CD8-positive, alpha-beta T cell (primary cell): ENCODE measurements at regions of chr3 and their contacts with region 1.

Region 1: DNA sequence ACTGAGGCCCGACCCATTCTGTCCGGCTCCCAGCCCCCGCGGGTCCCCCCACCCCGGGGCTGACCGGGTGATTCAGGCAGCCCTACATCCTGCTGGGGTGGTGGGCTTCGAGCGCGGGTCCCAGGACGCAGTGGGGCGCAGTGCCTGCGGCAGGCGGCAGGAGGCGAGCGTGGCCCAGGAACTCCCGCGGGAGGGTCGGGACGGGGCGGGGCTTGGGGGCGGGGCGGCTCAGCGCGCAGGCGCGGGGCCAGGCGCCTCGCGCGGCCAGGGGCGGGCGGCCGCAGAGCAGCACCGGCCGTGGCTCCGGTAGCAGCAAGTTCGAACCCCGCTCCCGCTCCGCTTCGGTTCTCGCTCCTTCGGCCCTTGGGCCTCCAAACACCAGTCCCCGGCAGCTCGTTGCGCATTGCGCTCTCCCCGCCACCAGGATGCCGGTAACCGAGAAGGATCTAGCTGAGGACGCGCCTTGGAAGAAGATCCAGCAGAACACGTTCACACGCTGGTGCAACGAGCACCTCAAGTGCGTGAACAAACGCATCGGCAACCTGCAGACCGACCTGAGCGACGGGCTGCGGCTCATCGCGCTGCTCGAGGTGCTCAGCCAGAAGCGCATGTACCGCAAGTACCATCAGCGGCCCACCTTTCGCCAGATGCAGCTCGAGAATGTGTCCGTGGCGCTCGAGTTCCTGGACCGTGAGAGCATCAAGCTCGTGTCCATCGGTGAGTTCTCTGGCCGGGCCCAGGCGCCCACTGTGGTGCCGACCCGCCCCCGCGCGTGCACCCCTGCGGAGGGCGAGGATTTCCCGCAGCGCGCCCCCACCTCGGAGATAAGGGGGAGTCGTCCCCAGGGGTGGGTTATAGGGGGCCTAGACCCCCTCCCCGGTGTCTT is at the start of gene FLNB:
- DNase-seq: peak; percentile 62 to 87 (median 74)
- ATAC-seq: peak; percentile 86
- H3K4me3 ChIP-seq: peak within 1 kb of the TSS; percentile 85 to 97
- H3K4me3 Mint-ChIP-seq: peak within 1 kb of the TSS; percentile 86
- H3K27ac ChIP-seq: peak within 1 kb of the TSS; percentile 46 to 72
- H3K27ac Mint-ChIP-seq: peak within 1 kb of the TSS; percentile 84
- H3K4me1 ChIP-seq: peaks cover 40% of the 10 kb centered on the region
- H3K4me1 Mint-ChIP-seq: peaks cover 38% of the 10 kb centered on the region
- H3K27me3 ChIP-seq: no peaks in the 10 kb centered on the region
- H3K27me3 Mint-ChIP-seq: no peaks in the 10 kb centered on the region
- CTCF ChIP-seq: peak; percentile 77
- total RNA-seq, gene FLNB: 46.8 to 52.1 TPM

Region 2: DNA sequence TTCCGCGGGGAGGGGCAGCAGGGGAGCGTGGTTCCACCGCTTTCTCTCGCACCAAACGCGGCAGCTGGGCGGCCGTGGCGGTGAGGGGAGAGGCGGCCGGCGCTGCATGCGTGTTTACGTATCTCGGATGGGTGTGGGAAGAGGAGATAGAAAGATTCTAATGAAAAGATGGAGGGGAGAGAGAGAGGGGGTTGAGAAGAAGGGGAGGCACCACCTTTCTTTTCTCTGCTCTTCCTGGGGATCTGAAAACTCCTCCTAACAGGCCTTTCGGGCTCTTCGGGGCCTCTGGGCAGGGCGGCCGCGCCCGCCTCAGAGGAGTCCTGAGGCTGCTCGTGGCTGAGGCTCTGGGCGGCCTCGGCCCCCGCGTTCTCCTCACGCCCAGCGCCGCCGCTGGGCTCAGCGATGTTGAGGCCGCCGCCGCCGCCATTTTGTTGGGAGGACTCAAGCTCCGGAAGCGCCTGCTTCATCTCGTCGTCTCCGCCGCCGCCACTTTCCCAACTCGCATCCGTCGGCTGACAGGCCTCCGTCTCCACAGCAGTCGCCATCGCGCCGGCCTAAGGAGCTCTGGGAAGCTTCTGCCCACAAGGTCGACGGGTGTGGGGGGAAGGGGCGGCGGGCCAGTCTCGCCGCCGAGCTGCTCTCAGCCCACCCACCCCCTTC is 1325.8 kb before region 1 on chr3:
- CTCF ChIA-PET with region 1: no interaction called
- POLR2A ChIA-PET with region 1: no interaction called
- intact Hi-C with region 1: loop called in 1 of 2 experiments (anchors 5 kb)
- DNase-seq: peak; percentile 52 to 88 (median 77)
- ATAC-seq: peak; percentile 69
- H3K4me3 ChIP-seq: peak overlapping the region; percentile 89 to 91
- H3K4me3 Mint-ChIP-seq: peak overlapping the region; percentile 95
- H3K27ac ChIP-seq: peak overlapping the region; percentile 98
- H3K27ac Mint-ChIP-seq: peak overlapping the region; percentile 99
- H3K4me1 ChIP-seq: peaks cover 47% of the 10 kb centered on the region
- H3K4me1 Mint-ChIP-seq: peaks cover 39% of the 10 kb centered on the region
- H3K27me3 ChIP-seq: no peaks in the 10 kb centered on the region
- H3K27me3 Mint-ChIP-seq: no peaks in the 10 kb centered on the region
- CTCF ChIP-seq: no peak

Region 3: DNA sequence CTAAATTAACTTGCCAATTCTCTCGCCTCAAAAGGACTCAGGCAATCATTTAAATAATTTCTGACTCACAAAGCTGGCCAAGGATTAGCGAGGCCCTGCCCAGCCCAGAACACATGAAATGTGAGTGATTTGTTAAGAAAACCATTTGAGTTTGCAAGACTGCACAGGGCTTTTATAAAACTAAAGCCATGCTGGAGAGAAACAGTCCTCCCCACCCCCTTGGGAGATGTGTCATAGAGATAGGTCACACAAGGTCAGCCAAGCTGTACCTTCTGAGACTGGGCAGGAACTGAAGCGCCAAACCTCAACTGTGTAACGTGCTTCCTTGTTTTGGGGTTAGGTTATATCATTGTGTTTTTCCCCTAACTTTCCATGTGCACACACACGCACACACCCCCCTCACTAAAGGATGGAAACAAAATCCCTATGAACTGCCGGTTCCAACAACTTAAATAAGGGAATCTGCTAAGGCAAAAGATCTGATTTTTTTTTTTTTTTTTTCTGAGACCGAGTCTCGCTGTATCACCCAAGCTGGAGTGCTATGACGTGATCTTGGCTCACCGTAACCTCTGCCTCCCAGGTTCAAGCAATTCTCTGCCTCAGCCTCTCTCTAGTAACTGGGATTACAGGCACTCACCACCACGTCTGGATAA is 939.8 kb before region 1 on chr3:
- CTCF ChIA-PET with region 1: no interaction called
- POLR2A ChIA-PET with region 1: no interaction called
- intact Hi-C with region 1: no loop called
- DNase-seq: peak in 4 of 9 experiments; percentile 6 to 57 (median 26)
- ATAC-seq: peak; percentile 40
- H3K4me3 ChIP-seq: no peak overlapping the region
- H3K4me3 Mint-ChIP-seq: no peak overlapping the region
- H3K27ac ChIP-seq: no peak overlapping the region
- H3K27ac Mint-ChIP-seq: no peak overlapping the region
- H3K4me1 ChIP-seq: no peaks in the 10 kb centered on the region
- H3K4me1 Mint-ChIP-seq: peaks cover 3% of the 10 kb centered on the region
- H3K27me3 ChIP-seq: no peaks in the 10 kb centered on the region
- H3K27me3 Mint-ChIP-seq: peaks cover 10% of the 10 kb centered on the region
- CTCF ChIP-seq: no peak

Region 4: GRCh38 chr3:58074997-58075396 is 66.6 kb after region 1 on chr3:
- CTCF ChIA-PET with region 1: interaction called, 16 read pairs
- POLR2A ChIA-PET with region 1: no interaction called
- intact Hi-C with region 1: loop called (anchors 5 kb)
- DNase-seq: peak in 4 of 9 experiments; percentile 8 to 74 (median 43)
- ATAC-seq: peak; percentile 83
- H3K4me3 ChIP-seq: no peak overlapping the region
- H3K4me3 Mint-ChIP-seq: peak overlapping the region; percentile 27
- H3K27ac ChIP-seq: no peak overlapping the region
- H3K27ac Mint-ChIP-seq: no peak overlapping the region
- H3K4me1 ChIP-seq: peaks cover 28% of the 10 kb centered on the region
- H3K4me1 Mint-ChIP-seq: peaks cover 39% of the 10 kb centered on the region
- H3K27me3 ChIP-seq: no peaks in the 10 kb centered on the region
- H3K27me3 Mint-ChIP-seq: no peaks in the 10 kb centered on the region
- CTCF ChIP-seq: no peak

Region 5: DNA sequence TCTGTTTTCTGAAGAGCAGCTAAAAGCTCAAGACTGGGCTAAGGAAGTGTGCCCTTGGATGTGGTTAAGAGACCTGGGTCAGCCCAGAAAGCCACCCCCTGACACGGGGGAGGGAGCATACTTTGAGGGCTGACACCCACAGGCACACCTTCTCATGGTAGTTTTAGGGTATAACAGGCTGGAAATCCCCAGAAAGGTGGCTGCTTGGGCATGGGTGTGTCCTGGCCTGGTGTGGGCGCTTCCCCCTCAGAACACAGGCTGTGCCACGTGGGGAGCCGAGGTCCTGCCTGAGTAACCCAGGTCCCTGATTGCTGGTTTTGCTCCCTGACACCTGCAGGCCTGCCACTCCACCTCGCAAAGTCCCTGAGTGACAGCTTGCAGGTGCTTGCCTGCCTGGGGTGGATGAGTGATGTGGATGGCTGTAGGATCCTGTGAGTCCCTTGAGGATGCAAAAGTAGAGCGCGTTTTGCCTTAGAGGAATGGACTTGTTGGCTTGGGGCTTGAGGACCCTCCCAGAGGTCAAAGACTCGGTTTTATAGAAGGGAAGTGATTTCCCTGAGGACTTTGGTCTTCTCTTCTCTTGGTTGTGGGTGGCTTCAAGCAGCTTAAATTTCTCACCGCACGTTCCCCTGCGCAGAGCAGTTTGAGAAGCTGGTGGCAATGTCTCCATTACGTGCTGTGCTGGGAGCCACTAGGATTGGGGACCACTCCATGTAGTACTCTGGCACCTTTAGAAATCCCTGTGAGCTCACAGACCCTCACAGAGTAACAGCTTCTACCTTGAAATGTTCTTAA is 108.0 kb after region 1 on chr3:
- CTCF ChIA-PET with region 1: interaction called, 14 read pairs
- POLR2A ChIA-PET with region 1: interaction called, 12 read pairs
- intact Hi-C with region 1: loop called (anchors 1 kb)
- DNase-seq: peak; percentile 29 to 92 (median 67)
- ATAC-seq: peak; percentile 94
- H3K4me3 ChIP-seq: no peak overlapping the region
- H3K4me3 Mint-ChIP-seq: peak overlapping the region; percentile 54
- H3K27ac ChIP-seq: peak overlapping the region; percentile 1 to 42
- H3K27ac Mint-ChIP-seq: peak overlapping the region; percentile 89
- H3K4me1 ChIP-seq: peaks cover 28% of the 10 kb centered on the region
- H3K4me1 Mint-ChIP-seq: peaks cover 44% of the 10 kb centered on the region
- H3K27me3 ChIP-seq: no peaks in the 10 kb centered on the region
- H3K27me3 Mint-ChIP-seq: no peaks in the 10 kb centered on the region
- CTCF ChIP-seq: no peak

Region 6: DNA sequence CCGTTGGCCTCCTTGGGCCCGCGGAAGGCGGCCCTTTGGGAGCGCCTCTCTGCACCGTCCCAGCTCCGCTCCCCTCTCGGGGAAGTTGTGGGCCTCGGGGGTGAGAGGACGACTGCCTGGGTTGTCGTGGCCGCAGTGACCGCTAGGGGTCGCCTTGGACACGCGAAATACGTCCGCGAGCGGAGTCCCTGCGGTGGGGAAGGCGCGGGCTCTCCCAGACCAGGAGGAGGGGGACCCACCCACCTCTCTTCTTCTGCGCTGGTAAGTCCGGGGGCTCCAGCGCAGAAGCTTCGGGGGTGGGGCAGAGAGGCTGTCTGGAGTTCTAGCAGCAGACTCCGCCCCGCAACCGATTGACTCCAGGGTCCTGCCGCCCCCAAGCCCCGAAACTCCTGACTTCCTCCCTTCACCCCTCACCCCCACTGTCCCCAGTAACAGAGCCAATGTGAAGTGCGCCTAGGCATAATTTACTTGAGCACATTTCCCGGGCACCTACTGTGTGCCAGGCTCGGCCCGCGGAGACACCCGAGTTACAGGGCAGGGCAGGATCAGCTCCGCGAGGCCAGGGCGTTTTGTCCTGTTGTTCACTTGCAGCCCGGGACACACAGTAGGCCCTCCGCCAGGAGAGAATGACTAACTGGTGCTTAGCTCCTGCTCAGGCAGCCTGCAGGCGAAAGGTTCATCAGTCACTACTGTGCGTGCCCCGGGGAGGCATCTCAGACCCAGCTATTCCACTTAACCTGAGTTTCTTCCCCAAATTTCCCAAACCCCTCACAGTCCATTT is 169.6 kb after region 1 on chr3:
- CTCF ChIA-PET with region 1: interaction called, 41 read pairs
- POLR2A ChIA-PET with region 1: no interaction called
- intact Hi-C with region 1: loop called (anchors 1 kb)
- DNase-seq: peak; percentile 74 to 95 (median 87)
- ATAC-seq: peak; percentile 94
- H3K4me3 ChIP-seq: peak overlapping the region; percentile 34 to 48
- H3K4me3 Mint-ChIP-seq: peak overlapping the region; percentile 69
- H3K27ac ChIP-seq: no peak overlapping the region
- H3K27ac Mint-ChIP-seq: no peak overlapping the region
- H3K4me1 ChIP-seq: peaks cover 14% of the 10 kb centered on the region
- H3K4me1 Mint-ChIP-seq: peaks cover 13% of the 10 kb centered on the region
- H3K27me3 ChIP-seq: peaks cover 0 to 2% of the 10 kb centered on the region in 2 experiments
- H3K27me3 Mint-ChIP-seq: peaks cover 9% of the 10 kb centered on the region
- CTCF ChIP-seq: peak; percentile 79

Region 7: DNA sequence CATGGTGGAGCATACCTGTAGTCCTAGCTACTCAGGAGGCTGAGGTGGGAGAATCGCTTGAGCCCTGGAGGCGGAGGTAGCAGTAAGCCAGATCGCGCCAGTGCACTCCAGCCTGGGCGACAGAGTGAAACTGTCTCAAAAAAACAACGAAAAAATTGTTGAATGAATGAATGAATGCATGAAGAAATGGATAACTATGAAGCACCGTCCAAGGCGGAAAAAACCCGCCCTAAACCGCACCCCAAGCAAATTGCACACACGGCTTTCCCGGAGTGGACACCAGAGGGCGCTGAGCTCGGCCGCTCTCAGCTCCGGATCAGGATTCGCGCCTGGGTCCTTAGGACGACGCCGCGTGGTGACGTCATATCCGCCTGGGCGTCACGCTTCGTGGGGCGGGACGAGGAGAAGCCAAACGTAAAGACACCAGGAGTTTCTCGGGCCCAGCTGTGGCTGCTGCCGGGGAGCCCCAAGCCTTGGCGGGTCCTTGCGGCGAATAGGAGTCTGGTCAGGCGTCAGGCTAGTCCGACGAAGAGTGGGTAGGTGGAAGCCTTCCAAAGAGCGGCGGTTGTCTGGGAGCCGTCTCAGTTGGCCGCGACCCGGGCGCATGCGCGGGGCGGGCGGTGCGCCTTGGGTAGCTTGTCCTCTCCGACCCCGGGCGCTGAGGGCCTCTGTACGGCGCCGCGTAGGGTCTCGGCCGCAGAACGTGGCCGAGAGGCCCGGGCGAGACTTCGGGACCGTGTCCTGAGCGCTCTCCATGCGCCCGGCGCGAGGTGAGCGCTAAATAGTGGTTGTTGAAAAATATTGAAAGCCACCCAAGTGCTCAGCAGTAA is 297.7 kb after region 1 on chr3 and contains the starts of genes HTD2 and RPP14:
- CTCF ChIA-PET with region 1: interaction called, 3 read pairs
- POLR2A ChIA-PET with region 1: interaction called, 3 read pairs
- intact Hi-C with region 1: loop called (anchors 2 kb)
- DNase-seq: peak; percentile 97 to 100 (median 99)
- ATAC-seq: peak; percentile 89
- H3K4me3 ChIP-seq: peak within 1 kb of the TSS; percentile 85 to 99
- H3K4me3 Mint-ChIP-seq: peak within 1 kb of the TSS; percentile 97
- H3K27ac ChIP-seq: peak within 1 kb of the TSS; percentile 91 to 100
- H3K27ac Mint-ChIP-seq: peak within 1 kb of the TSS; percentile 99
- H3K4me1 ChIP-seq: peaks cover 18% of the 10 kb centered on the region
- H3K4me1 Mint-ChIP-seq: peaks cover 44% of the 10 kb centered on the region
- H3K27me3 ChIP-seq: no peaks in the 10 kb centered on the region
- H3K27me3 Mint-ChIP-seq: peaks cover 14% of the 10 kb centered on the region
- CTCF ChIP-seq: peak; percentile 93
- total RNA-seq, gene HTD2: 6.4 to 8.9 TPM
- total RNA-seq, gene RPP14: 18.3 to 20.4 TPM